H1 (cell line): ENCODE measurements at regions of chr3 and their contacts with region 1.

Region 1: GRCh38 chr3:62665598-62666437 is 209.4 kb downstream of the CADPS start:
- DNase-seq: peak; percentile 56 to 96
- H3K4me3 ChIP-seq: no peak overlapping the region
- H3K27ac ChIP-seq: no peak overlapping the region
- H3K4me1 ChIP-seq: peaks cover 0 to 5% (median 2%) of the 10 kb centered on the region in 4 experiments; a peak in 4 of 7 replicates
- H3K27me3 ChIP-seq: no peaks in the 10 kb centered on the region
- CTCF ChIP-seq: peak; percentile 83 to 96 (median 95)
- EP300 ChIP-seq: no peak
- POLR2A ChIP-seq: no peak
- RAD21 ChIP-seq: peak; percentile 99

Region 2: GRCh38 chr3:62538706-62539356 is 127.0 kb before region 1 on chr3:
- CTCF ChIA-PET with region 1: no interaction called
- POLR2A ChIA-PET with region 1: no interaction called
- DNase-seq: no peak
- H3K4me3 ChIP-seq: peak overlapping the region in 1 of 4 experiments; percentile 33; a peak in 1 of 8 replicates
- H3K27ac ChIP-seq: no peak overlapping the region
- H3K4me1 ChIP-seq: peaks cover 6 to 15% (median 12%) of the 10 kb centered on the region in 4 experiments; a peak in 6 of 7 replicates
- H3K27me3 ChIP-seq: no peaks in the 10 kb centered on the region
- CTCF ChIP-seq: no peak
- EP300 ChIP-seq: no peak
- POLR2A ChIP-seq: no peak
- RAD21 ChIP-seq: no peak

Region 3: GRCh38 chr3:62553811-62554210 is 112.0 kb before region 1 on chr3:
- CTCF ChIA-PET with region 1: no interaction called
- POLR2A ChIA-PET with region 1: no interaction called
- DNase-seq: no peak
- H3K4me3 ChIP-seq: no peak overlapping the region
- H3K27ac ChIP-seq: no peak overlapping the region
- H3K4me1 ChIP-seq: peaks cover under 1 to 10% (median 5%) of the 10 kb centered on the region in 4 experiments; a peak in 5 of 7 replicates
- H3K27me3 ChIP-seq: no peaks in the 10 kb centered on the region
- CTCF ChIP-seq: no peak
- EP300 ChIP-seq: no peak
- POLR2A ChIP-seq: no peak
- RAD21 ChIP-seq: no peak

Region 4: DNA sequence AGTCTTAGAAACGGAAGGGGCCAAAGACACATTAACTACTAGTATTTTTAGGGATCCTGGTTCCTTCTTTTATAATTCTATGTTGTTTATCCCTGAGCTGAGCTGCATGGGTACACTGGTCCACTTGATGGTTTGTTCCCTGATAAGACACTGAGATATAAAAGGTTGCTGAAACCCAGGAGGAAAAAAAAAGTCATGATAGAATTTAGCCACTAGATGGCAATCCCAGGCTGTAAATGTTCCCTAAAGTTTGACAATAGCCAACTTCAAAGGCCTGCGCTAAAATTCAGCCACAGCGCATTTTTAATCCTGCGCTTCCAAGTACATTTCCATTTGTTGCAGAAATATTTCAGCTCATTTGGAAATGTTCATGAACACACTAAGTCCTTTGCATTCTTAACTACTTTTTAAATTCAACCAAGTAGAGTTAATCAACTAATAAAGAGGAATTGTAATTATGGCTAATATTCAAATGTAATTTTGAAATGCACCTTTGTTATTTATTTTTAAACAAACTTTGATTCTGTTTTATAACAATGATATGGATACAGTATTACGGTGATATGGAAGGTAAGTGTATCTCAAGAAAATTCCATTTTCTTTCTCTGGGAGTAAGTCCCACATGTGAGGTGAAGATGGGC is 43.1 kb before region 1 on chr3:
- CTCF ChIA-PET with region 1: interaction called, 14 read pairs
- POLR2A ChIA-PET with region 1: no interaction called
- DNase-seq: no peak
- H3K4me3 ChIP-seq: no peak overlapping the region
- H3K27ac ChIP-seq: no peak overlapping the region
- H3K4me1 ChIP-seq: no peaks in the 10 kb centered on the region
- H3K27me3 ChIP-seq: no peaks in the 10 kb centered on the region
- CTCF ChIP-seq: peak in 2 of 3 experiments; percentile 61 to 63; a peak in 3 of 4 replicates
- EP300 ChIP-seq: no peak
- POLR2A ChIP-seq: no peak
- RAD21 ChIP-seq: peak; percentile 83 to 88

Region 5: GRCh38 chr3:62686506-62687286 is 20.9 kb after region 1 on chr3:
- CTCF ChIA-PET with region 1: interaction called, 46 read pairs
- POLR2A ChIA-PET with region 1: no interaction called
- DNase-seq: no peak
- H3K4me3 ChIP-seq: no peak overlapping the region
- H3K27ac ChIP-seq: no peak overlapping the region
- H3K4me1 ChIP-seq: peaks cover 0 to 4% (median 1%) of the 10 kb centered on the region in 4 experiments; a peak in 2 of 7 replicates
- H3K27me3 ChIP-seq: no peaks in the 10 kb centered on the region
- CTCF ChIP-seq: no peak
- EP300 ChIP-seq: no peak
- POLR2A ChIP-seq: no peak
- RAD21 ChIP-seq: no peak

Region 6: DNA sequence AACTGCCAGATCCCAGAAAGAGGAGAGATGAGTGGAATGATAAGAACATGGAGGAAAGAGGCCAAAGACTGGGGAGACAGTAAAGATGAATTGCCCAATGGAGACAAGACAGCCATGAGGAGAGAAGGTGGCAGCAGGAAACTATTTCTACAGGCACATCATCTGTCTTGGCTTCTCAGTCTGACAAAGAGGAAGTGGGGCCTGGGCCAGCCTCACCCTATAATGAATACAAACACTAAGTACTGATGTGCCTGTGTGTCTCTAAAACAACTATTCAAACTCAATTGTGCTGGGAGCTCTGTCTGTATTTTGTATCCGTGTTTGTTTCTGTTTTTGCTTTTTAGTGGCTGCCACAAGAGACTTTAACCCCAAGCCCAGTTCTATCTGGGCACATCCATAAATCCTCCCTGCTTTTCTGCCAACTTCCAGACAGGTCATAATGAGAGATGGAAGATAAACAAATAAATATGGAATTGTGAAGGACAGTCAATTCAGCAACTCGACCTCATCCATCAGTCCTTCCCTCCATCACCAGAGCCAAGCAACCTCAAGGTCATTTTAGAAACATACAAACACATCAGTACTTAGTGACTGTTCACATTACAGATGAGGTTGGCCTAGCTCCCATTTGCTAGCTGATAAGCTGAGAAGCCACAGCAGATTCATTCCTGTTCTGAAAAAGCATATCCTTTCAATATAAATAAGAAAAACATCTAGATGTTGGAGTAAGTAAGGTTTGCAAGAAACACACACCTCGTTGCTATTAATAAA is 92.7 kb after region 1 on chr3:
- CTCF ChIA-PET with region 1: interaction called, 11 read pairs
- POLR2A ChIA-PET with region 1: no interaction called
- DNase-seq: no peak
- H3K4me3 ChIP-seq: no peak overlapping the region
- H3K27ac ChIP-seq: no peak overlapping the region
- H3K4me1 ChIP-seq: no peaks in the 10 kb centered on the region
- H3K27me3 ChIP-seq: no peaks in the 10 kb centered on the region
- CTCF ChIP-seq: no peak
- EP300 ChIP-seq: no peak
- POLR2A ChIP-seq: no peak
- RAD21 ChIP-seq: no peak

Region 7: DNA sequence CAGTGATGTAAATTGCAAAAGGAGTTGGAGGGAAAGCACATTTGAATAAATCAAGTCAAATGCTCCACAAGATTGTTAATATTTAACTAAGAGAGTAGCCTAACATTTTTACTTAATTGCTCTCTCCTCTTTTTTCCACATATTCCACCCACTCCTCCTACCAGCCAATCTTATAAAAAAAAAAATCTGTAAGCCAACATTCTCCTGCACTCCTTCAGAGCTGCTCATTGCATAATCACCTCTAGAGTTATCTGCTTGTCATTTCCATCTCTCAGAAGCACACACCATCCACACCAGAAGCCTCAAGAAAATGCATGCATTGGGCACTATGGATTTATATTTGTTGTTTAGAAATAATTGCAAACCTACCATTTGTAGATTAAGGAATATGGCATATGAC is 145.3 kb after region 1 on chr3:
- CTCF ChIA-PET with region 1: interaction called, 216 read pairs
- POLR2A ChIA-PET with region 1: no interaction called
- DNase-seq: no peak
- H3K4me3 ChIP-seq: no peak overlapping the region
- H3K27ac ChIP-seq: no peak overlapping the region
- H3K4me1 ChIP-seq: peaks cover 0 to 3% (median 0%) of the 10 kb centered on the region in 4 experiments; a peak in 1 of 7 replicates
- H3K27me3 ChIP-seq: no peaks in the 10 kb centered on the region
- CTCF ChIP-seq: no peak
- EP300 ChIP-seq: no peak
- POLR2A ChIP-seq: no peak
- RAD21 ChIP-seq: no peak

Region 8: GRCh38 chr3:62856630-62857029 is 190.8 kb after region 1 on chr3:
- CTCF ChIA-PET with region 1: interaction called, 14 read pairs
- POLR2A ChIA-PET with region 1: no interaction called
- DNase-seq: no peak
- H3K4me3 ChIP-seq: no peak overlapping the region; a peak in 1 of 8 replicates
- H3K27ac ChIP-seq: no peak overlapping the region
- H3K4me1 ChIP-seq: peaks cover 0 to 8% (median 4%) of the 10 kb centered on the region in 4 experiments; a peak in 4 of 7 replicates
- H3K27me3 ChIP-seq: no peaks in the 10 kb centered on the region
- CTCF ChIP-seq: no peak
- EP300 ChIP-seq: no peak
- POLR2A ChIP-seq: no peak
- RAD21 ChIP-seq: no peak

Region 9: DNA sequence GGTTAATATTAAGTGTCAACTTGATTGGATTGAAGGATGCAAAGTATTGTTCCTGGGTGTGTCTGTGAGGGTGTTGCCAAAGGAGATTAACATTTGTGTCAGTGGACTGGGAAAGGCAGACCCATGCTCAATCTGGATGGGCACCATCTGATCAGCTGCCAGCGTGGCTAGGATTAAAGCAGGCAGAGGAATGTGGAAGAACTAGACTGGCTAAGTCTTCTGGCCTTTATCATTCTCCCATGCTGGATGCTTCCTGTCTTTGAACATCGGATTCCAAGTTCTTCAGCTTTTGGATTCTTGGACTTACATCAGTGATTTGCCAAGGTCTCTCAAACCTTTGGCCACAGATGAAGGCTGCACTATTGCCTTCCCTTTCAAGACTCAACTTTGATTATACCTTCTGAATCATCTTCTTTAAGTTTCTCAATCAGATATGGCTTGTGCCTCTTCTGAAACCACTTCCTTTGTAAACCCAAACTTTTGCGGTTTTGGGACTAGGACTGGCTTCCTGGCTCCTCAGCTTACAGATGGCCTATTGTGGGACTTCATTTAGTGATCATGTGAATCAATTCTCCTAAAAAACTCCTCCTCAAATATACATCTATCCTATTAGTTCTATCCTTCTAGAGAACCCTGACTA is 256.4 kb after region 1 on chr3:
- CTCF ChIA-PET with region 1: interaction called, 73 read pairs
- POLR2A ChIA-PET with region 1: no interaction called
- DNase-seq: no peak
- H3K4me3 ChIP-seq: no peak overlapping the region
- H3K27ac ChIP-seq: no peak overlapping the region
- H3K4me1 ChIP-seq: peaks cover 0 to 6% (median 4%) of the 10 kb centered on the region in 4 experiments; a peak in 6 of 7 replicates
- H3K27me3 ChIP-seq: peaks cover 0 to 1% (median 0%) of the 10 kb centered on the region in 4 experiments; a peak in 2 of 7 replicates
- CTCF ChIP-seq: no peak
- EP300 ChIP-seq: no peak
- POLR2A ChIP-seq: no peak
- RAD21 ChIP-seq: no peak